K562 (cell line): ENCODE measurements at regions of chr12 and their contacts with region 1.

Region 1: GRCh38 chr12:86275356-86275755 is 19.2 kb upstream of the MGAT4C start:
- DNase-seq: no peak
- ATAC-seq: no peak
- H3K4me3 ChIP-seq: no peak overlapping the region
- H3K27ac ChIP-seq: no peak overlapping the region
- H3K4me1 ChIP-seq: no peaks in the 10 kb centered on the region
- H3K27me3 ChIP-seq: no peaks in the 10 kb centered on the region
- CTCF ChIP-seq: no peak
- EP300 ChIP-seq: no peak
- POLR2A ChIP-seq: no peak
- RAD21 ChIP-seq: no peak

Region 2: DNA sequence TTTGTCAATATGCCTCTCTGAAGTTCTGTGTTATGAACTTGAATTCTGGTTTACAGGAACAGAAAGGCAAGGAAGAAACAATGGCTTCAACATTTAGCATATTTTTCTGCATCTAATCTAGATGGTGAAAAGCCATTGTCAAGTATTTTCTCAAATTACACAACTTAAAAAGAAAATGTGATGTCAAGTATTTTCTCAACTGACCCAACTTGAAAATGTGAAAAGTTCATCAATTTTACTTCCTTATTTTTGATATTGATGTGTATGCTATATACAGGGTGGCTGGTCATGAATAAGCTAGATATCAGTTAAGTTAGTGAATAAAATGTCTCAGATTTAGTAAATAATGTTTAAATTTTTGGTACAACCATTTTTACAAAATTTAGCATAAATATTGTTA is 798.6 kb before region 1 on chr12:
- CTCF ChIA-PET with region 1: no interaction called
- POLR2A ChIA-PET with region 1: no interaction called
- in situ Hi-C with region 1: loop called (anchors 10 kb)
- intact Hi-C with region 1: no loop called
- DNase-seq: no peak
- ATAC-seq: no peak
- H3K4me3 ChIP-seq: no peak overlapping the region
- H3K27ac ChIP-seq: no peak overlapping the region
- H3K4me1 ChIP-seq: no peaks in the 10 kb centered on the region
- H3K27me3 ChIP-seq: no peaks in the 10 kb centered on the region
- CTCF ChIP-seq: no peak
- EP300 ChIP-seq: no peak
- POLR2A ChIP-seq: no peak
- RAD21 ChIP-seq: no peak

Region 3: GRCh38 chr12:85894653-85895052 is 380.7 kb before region 1 on chr12:
- CTCF ChIA-PET with region 1: no interaction called
- POLR2A ChIA-PET with region 1: no interaction called
- in situ Hi-C with region 1: no loop called
- intact Hi-C with region 1: no loop called
- DNase-seq: no peak
- ATAC-seq: no peak
- H3K4me3 ChIP-seq: no peak overlapping the region
- H3K27ac ChIP-seq: no peak overlapping the region
- H3K4me1 ChIP-seq: no peaks in the 10 kb centered on the region
- H3K27me3 ChIP-seq: no peaks in the 10 kb centered on the region
- CTCF ChIP-seq: no peak
- EP300 ChIP-seq: no peak
- POLR2A ChIP-seq: no peak
- RAD21 ChIP-seq: no peak